MCF 10A (cell line): ENCODE measurements at regions of chr17 and their contacts with region 1.

Region 1: GRCh38 chr17:1379930-1380313 is 20.1 kb downstream of the YWHAE start:
- DNase-seq: no peak
- H3K4me3 Mint-ChIP-seq: no peak overlapping the region
- H3K27ac Mint-ChIP-seq: peak overlapping the region; percentile 54
- H3K4me1 Mint-ChIP-seq: peaks cover 38% of the 10 kb centered on the region
- H3K27me3 Mint-ChIP-seq: no peaks in the 10 kb centered on the region
- CTCF ChIP-seq: no peak

Region 2: DNA sequence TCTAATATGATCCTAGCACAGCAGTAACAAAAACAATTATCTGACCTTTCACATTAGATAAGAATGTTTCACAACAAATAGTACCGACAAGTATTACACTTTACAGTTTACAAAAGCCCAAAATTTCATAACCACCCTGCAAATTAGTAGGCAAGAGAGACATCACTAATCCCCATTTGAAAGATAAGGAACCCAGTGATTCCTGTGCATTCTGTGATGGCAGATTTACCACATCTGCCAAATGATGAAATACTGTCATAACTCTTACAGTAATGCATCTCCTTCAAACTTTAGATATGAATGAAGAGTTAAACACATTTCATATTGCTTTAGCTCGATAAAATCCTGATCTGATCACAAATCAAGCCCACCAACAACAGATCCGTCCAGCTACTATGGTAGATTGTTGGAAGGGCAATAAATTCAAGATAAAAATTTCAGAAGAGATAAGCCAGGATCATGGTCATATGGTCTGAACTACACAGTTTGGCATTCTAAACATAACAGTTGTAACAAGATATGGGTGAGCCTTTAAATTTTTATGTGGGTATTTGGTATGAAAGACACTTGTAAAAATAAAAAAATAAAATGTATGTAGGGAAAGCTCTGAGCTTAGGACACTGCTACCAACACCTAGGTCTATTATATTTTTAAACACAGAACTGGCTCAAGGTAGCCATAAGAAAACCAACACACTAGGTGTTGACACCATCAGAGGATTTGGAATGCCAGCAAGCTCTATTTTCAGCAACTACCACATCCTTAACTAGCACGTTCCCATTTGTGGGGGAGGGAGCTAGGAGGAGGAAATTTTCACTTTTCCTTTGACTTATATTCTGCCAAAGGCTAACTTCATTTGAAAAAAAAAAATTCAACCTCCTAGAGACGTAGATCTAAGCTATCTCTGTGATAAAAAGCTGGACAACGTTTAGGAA is 10.8 kb after region 1 on chr17:
- CTCF ChIA-PET with region 1: interaction called, 3 read pairs
- POLR2A ChIA-PET with region 1: interaction called, 10 read pairs
- intact Hi-C with region 1: no loop called
- DNase-seq: no peak
- H3K4me3 Mint-ChIP-seq: no peak overlapping the region
- H3K27ac Mint-ChIP-seq: no peak overlapping the region
- H3K4me1 Mint-ChIP-seq: peaks cover 9% of the 10 kb centered on the region
- H3K27me3 Mint-ChIP-seq: no peaks in the 10 kb centered on the region
- CTCF ChIP-seq: no peak